Activated CD8-positive, alpha-beta T cell treated with anti-CD3 and anti-CD28 coated beads, Interleukin-2, amount 10 ng/mL, durations not matched to agents 7 days and 5 days (primary cell): ENCODE measurements at regions of chr4 and their contacts with region 1.

Region 1: GRCh38 chr4:84971319-84971932 is 4.9 kb upstream of the WDFY3 start:
- DNase-seq: no peak
- ATAC-seq: no peak
- H3K4me3 Mint-ChIP-seq: no peak overlapping the region
- H3K27ac Mint-ChIP-seq: no peak overlapping the region
- H3K4me1 Mint-ChIP-seq: peaks cover 8% of the 10 kb centered on the region
- H3K27me3 Mint-ChIP-seq: peaks cover 17% of the 10 kb centered on the region

Region 2: GRCh38 chr4:84578540-84579402 is 392.7 kb before region 1 on chr4:
- CTCF ChIA-PET with region 1: interaction called, 12 read pairs
- POLR2A ChIA-PET with region 1: no interaction called
- DNase-seq: no peak
- ATAC-seq: no peak
- H3K4me3 Mint-ChIP-seq: no peak overlapping the region
- H3K27ac Mint-ChIP-seq: no peak overlapping the region
- H3K4me1 Mint-ChIP-seq: peaks cover 9% of the 10 kb centered on the region
- H3K27me3 Mint-ChIP-seq: peaks cover 21% of the 10 kb centered on the region

Region 3: GRCh38 chr4:84985952-84986351 is 14.5 kb after region 1 on chr4:
- CTCF ChIA-PET with region 1: no interaction called
- POLR2A ChIA-PET with region 1: no interaction called
- DNase-seq: no peak
- ATAC-seq: no peak
- H3K4me3 Mint-ChIP-seq: no peak overlapping the region
- H3K27ac Mint-ChIP-seq: no peak overlapping the region
- H3K4me1 Mint-ChIP-seq: no peaks in the 10 kb centered on the region
- H3K27me3 Mint-ChIP-seq: no peaks in the 10 kb centered on the region